CD8-positive, alpha-beta T cell (primary cell): ENCODE measurements at regions of chr16 and their contacts with region 1.

Region 1: GRCh38 chr16:68040507-68041288 is 17.6 kb downstream of the DUS2 start:
- DNase-seq: peak; percentile 84 to 98 (median 90)
- ATAC-seq: peak; percentile 99
- H3K4me3 ChIP-seq: no peak overlapping the region
- H3K4me3 Mint-ChIP-seq: no peak overlapping the region
- H3K27ac ChIP-seq: peak overlapping the region in 1 of 2 experiments; percentile 7
- H3K27ac Mint-ChIP-seq: peak overlapping the region; percentile 45
- H3K4me1 ChIP-seq: peaks cover 6% of the 10 kb centered on the region
- H3K4me1 Mint-ChIP-seq: peaks cover 11% of the 10 kb centered on the region
- H3K27me3 ChIP-seq: no peaks in the 10 kb centered on the region
- H3K27me3 Mint-ChIP-seq: no peaks in the 10 kb centered on the region
- CTCF ChIP-seq: peak; percentile 88

Region 2: DNA sequence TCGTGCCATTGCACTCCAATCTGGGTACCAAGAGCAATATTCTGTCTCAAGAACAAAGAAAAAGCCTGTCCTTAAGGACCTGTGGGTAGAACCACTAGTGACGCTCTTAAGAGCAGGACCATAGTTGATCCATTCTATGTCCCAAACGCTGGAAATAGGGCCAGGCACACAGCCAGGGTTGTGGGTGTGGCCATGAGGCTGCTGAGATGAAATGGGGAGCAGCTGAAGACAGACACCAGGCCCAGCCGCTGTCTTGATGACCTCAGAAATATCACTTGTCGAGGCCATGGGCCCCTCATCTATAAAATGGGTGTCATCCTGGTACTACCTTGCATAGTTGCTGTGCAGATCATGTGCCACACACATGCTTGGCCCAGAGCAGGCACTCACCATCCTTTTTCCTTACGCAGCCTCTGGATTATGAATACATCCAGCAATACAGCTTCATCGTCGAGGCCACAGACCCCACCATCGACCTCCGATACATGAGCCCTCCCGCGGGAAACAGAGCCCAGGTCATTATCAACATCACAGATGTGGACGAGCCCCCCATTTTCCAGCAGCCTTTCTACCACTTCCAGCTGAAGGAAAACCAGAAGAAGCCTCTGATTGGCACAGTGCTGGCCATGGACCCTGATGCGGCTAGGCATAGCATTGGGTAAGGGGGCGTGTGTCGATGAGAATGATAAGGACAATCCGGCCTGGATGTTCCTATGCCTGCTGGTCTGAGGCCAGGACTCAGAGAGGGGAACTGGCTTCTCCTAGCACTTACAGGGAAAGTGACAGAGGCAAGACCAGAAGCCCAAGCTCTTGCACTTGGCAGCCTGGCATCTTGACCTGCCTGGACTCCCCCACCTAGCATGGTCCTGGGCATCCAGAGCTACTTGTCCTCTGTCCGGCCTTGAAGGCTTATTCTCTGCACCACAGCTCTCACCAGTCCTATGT is 1648.7 kb before region 1 on chr16:
- CTCF ChIA-PET with region 1: no interaction called
- POLR2A ChIA-PET with region 1: no interaction called
- intact Hi-C with region 1: no loop called
- DNase-seq: no peak
- ATAC-seq: no peak
- H3K4me3 ChIP-seq: no peak overlapping the region
- H3K4me3 Mint-ChIP-seq: no peak overlapping the region
- H3K27ac ChIP-seq: no peak overlapping the region
- H3K27ac Mint-ChIP-seq: no peak overlapping the region
- H3K4me1 ChIP-seq: no peaks in the 10 kb centered on the region
- H3K4me1 Mint-ChIP-seq: no peaks in the 10 kb centered on the region
- H3K27me3 ChIP-seq: no peaks in the 10 kb centered on the region
- H3K27me3 Mint-ChIP-seq: no peaks in the 10 kb centered on the region
- CTCF ChIP-seq: no peak

Region 3: DNA sequence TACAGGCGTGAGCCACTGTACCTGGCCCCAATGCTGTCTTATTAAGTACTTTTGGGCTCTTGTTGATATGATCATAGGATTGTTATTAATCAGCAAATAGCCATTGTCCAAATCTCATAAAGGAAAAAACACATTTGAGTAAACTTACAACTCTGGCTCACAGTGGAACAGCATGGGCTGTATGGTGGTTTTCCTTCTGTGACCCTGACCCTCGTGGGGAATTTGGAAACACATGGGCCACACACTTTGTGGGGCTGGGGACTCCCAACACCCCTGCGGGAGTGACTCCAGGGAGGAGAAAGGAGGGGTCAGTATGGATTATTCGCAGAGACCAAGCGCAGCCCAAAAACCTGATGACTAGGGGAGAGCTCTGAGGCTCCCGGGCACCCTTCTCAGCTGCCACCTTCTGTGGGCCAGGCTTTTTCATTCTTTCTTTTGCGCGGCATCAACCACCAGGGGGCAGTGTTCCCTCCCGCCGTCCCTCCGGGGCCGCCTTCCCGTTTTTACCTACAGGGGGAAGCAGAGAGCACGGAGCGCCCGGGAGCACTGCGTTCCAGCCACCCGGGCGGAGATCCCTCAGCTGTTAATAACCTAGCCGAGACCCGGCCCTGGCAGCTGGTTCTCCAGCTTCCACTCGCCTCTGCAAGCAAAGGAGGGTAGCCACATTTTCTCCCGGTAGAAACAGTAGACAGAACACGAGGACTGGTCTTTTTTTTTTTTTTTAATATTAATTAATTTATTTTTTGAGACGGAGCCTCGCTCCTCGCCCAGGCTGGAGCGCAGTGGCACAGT is 224.3 kb before region 1 on chr16:
- CTCF ChIA-PET with region 1: interaction called, 20 read pairs
- POLR2A ChIA-PET with region 1: no interaction called
- intact Hi-C with region 1: loop called (anchors 1 to 2 kb)
- DNase-seq: peak; percentile 79 to 96 (median 90)
- ATAC-seq: peak; percentile 99
- H3K4me3 ChIP-seq: no peak overlapping the region
- H3K4me3 Mint-ChIP-seq: peak overlapping the region; percentile 66
- H3K27ac ChIP-seq: no peak overlapping the region
- H3K27ac Mint-ChIP-seq: no peak overlapping the region
- H3K4me1 ChIP-seq: peaks cover 4% of the 10 kb centered on the region
- H3K4me1 Mint-ChIP-seq: peaks cover 5% of the 10 kb centered on the region
- H3K27me3 ChIP-seq: no peaks in the 10 kb centered on the region
- H3K27me3 Mint-ChIP-seq: no peaks in the 10 kb centered on the region
- CTCF ChIP-seq: peak; percentile 100

Region 4: GRCh38 chr16:67993189-67994039 is 47.3 kb before region 1 on chr16:
- CTCF ChIA-PET with region 1: interaction called, 162 read pairs
- POLR2A ChIA-PET with region 1: interaction called, 3 read pairs
- intact Hi-C with region 1: loop called (anchors 1 kb)
- DNase-seq: peak; percentile 70 to 91 (median 79)
- ATAC-seq: peak; percentile 92
- H3K4me3 ChIP-seq: peak overlapping the region; percentile 38 to 41
- H3K4me3 Mint-ChIP-seq: peak overlapping the region; percentile 83
- H3K27ac ChIP-seq: peak overlapping the region; percentile 52 to 87
- H3K27ac Mint-ChIP-seq: peak overlapping the region; percentile 95
- H3K4me1 ChIP-seq: peaks cover 34% of the 10 kb centered on the region
- H3K4me1 Mint-ChIP-seq: peaks cover 34% of the 10 kb centered on the region
- H3K27me3 ChIP-seq: no peaks in the 10 kb centered on the region
- H3K27me3 Mint-ChIP-seq: no peaks in the 10 kb centered on the region
- CTCF ChIP-seq: peak; percentile 87

Region 5: GRCh38 chr16:68022704-68023522 is 17.8 kb before region 1 on chr16 and contains the starts of genes DDX28 and DUS2:
- CTCF ChIA-PET with region 1: interaction called, 20 read pairs
- POLR2A ChIA-PET with region 1: interaction called, 5 read pairs
- intact Hi-C with region 1: no loop called
- DNase-seq: peak; percentile 89 to 98 (median 94)
- ATAC-seq: peak; percentile 95
- H3K4me3 ChIP-seq: peak within 1 kb of the TSS; percentile 92 to 97
- H3K4me3 Mint-ChIP-seq: peak within 1 kb of the TSS; percentile 98
- H3K27ac ChIP-seq: peak within 1 kb of the TSS; percentile 86 to 88
- H3K27ac Mint-ChIP-seq: peak within 1 kb of the TSS; percentile 95
- H3K4me1 ChIP-seq: peaks cover 28% of the 10 kb centered on the region
- H3K4me1 Mint-ChIP-seq: peaks cover 36% of the 10 kb centered on the region
- H3K27me3 ChIP-seq: no peaks in the 10 kb centered on the region
- H3K27me3 Mint-ChIP-seq: no peaks in the 10 kb centered on the region
- CTCF ChIP-seq: no peak
- total RNA-seq, gene DDX28: 18.5 to 20.9 TPM
- total RNA-seq, gene DUS2: 9.5 TPM

Region 6: GRCh38 chr16:68055395-68055794 is 14.7 kb after region 1 on chr16:
- CTCF ChIA-PET with region 1: interaction called, 14 read pairs
- POLR2A ChIA-PET with region 1: no interaction called
- intact Hi-C with region 1: no loop called
- DNase-seq: no peak
- ATAC-seq: no peak
- H3K4me3 ChIP-seq: no peak overlapping the region
- H3K4me3 Mint-ChIP-seq: no peak overlapping the region
- H3K27ac ChIP-seq: no peak overlapping the region
- H3K27ac Mint-ChIP-seq: no peak overlapping the region
- H3K4me1 ChIP-seq: peaks cover 15% of the 10 kb centered on the region
- H3K4me1 Mint-ChIP-seq: peaks cover 11% of the 10 kb centered on the region
- H3K27me3 ChIP-seq: no peaks in the 10 kb centered on the region
- H3K27me3 Mint-ChIP-seq: no peaks in the 10 kb centered on the region
- CTCF ChIP-seq: no peak

Region 7: GRCh38 chr16:68229431-68230198 is 188.9 kb after region 1 on chr16:
- CTCF ChIA-PET with region 1: interaction called, 7 read pairs
- POLR2A ChIA-PET with region 1: no interaction called
- intact Hi-C with region 1: loop called in 1 of 2 experiments (anchors 1 kb)
- DNase-seq: peak in 6 of 9 experiments; percentile 36 to 72 (median 56)
- ATAC-seq: peak; percentile 64
- H3K4me3 ChIP-seq: no peak overlapping the region
- H3K4me3 Mint-ChIP-seq: no peak overlapping the region
- H3K27ac ChIP-seq: no peak overlapping the region
- H3K27ac Mint-ChIP-seq: peak overlapping the region; percentile 53
- H3K4me1 ChIP-seq: peaks cover 20% of the 10 kb centered on the region
- H3K4me1 Mint-ChIP-seq: peaks cover 41% of the 10 kb centered on the region
- H3K27me3 ChIP-seq: no peaks in the 10 kb centered on the region
- H3K27me3 Mint-ChIP-seq: no peaks in the 10 kb centered on the region
- CTCF ChIP-seq: peak; percentile 81